CD4-positive, alpha-beta T cell (primary cell): ENCODE measurements at regions of chr10 and their contacts with region 1.

Region 1: GRCh38 chr10:72364239-72364777 is 9.6 kb upstream of the DNAJB12 start:
- DNase-seq: peak; percentile 78 to 92 (median 82)
- ATAC-seq: peak; percentile 100
- H3K4me3 ChIP-seq: peak overlapping the region; percentile 24
- H3K4me3 Mint-ChIP-seq: no peak overlapping the region
- H3K27ac ChIP-seq: peak overlapping the region in 1 of 2 donors; percentile 54
- H3K27ac Mint-ChIP-seq: peak overlapping the region; percentile 74
- H3K4me1 ChIP-seq: peaks cover 14% of the 10 kb centered on the region
- H3K4me1 Mint-ChIP-seq: peaks cover 17% of the 10 kb centered on the region
- H3K27me3 ChIP-seq: no peaks in the 10 kb centered on the region
- H3K27me3 Mint-ChIP-seq: no peaks in the 10 kb centered on the region
- CTCF ChIP-seq: peak; percentile 80

Region 2: DNA sequence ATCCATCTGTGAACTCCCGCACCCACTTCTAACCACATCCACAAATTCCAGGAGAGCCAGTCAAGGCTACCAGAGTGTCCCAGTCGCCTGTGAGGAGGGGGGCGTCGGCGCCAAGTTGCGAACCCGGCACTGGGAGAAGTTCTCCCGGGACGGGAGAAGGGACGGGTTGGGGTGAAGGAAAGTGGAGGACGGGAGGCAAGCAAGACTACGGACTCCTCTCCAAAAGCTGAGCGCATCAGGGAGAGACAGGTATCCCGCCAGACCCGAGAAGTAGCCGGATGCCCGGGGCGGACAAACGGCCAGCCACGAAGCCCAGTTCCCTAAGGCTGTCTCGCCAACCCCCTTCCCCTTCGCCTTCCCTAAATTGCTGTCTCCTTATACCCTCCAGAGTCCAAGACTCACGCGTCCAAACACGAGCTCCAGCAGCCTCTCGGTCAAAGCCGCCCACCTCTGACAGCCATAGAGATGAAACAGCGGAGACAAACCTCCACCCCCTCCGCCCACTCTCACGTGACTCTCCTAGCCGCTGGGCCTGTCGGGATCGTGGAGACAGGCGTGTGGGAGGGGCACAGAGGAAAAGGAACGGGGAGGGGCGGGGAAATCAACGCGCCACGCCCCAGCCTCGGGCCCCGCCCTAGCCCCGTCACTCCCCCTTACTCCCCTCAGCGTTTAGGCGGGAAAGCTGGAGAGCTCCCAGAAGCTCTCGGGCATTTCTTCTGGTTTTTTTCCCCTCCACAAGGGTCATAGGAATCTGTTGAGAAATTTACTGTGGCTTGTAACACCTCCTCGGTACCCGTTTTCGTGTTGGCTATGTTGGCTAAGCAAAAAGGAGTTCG is 261.5 kb after region 1 on chr10 and contains the start of gene MICU1:
- CTCF ChIA-PET with region 1: no interaction called
- POLR2A ChIA-PET with region 1: no interaction called
- intact Hi-C with region 1: loop called in 1 of 2 experiments (anchors 5 kb)
- DNase-seq: peak; percentile 85 to 97 (median 92)
- ATAC-seq: peak; percentile 99
- H3K4me3 ChIP-seq: peak within 1 kb of the TSS; percentile 92
- H3K4me3 Mint-ChIP-seq: peak within 1 kb of the TSS; percentile 99
- H3K27ac ChIP-seq: peak within 1 kb of the TSS; percentile 15 to 42
- H3K27ac Mint-ChIP-seq: peak within 1 kb of the TSS; percentile 83
- H3K4me1 ChIP-seq: peaks cover 16% of the 10 kb centered on the region
- H3K4me1 Mint-ChIP-seq: peaks cover 26% of the 10 kb centered on the region
- H3K27me3 ChIP-seq: no peaks in the 10 kb centered on the region
- H3K27me3 Mint-ChIP-seq: no peaks in the 10 kb centered on the region
- CTCF ChIP-seq: no peak
- total RNA-seq, gene MICU1: 9.4 to 12.1 TPM

Region 3: DNA sequence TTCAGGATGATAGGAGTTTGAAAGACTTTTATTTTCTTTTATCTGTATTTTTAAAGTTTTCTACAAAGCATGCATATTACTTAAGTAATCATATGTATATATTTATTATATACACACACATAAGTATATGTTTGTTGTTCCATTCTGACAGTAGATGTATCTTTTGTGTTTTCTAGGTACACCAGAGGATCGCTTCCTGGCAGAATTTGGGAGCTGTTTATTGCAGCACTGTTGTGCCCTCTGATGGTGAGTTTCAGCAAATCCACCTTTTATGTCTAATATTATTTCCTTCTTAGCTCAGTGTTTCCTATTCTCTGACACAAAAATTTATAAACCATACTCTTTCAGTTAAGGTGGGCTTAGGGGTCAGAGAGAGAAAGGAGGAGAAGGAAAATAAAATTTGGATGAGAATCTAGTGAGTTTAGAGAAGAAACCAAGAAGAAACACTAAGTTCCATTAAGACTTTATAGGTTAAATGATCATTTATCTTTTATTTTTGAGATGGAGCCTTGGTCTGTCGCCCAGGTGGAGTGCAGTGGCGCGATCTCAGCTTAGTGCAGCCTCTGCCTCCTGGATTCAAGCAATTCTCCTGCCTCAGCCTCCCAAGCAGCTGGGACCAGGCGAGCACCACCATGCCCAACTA is 470.0 kb after region 1 on chr10:
- CTCF ChIA-PET with region 1: interaction called, 23 read pairs
- POLR2A ChIA-PET with region 1: interaction called, 18 read pairs
- intact Hi-C with region 1: loop called (anchors 1 kb)
- DNase-seq: peak in 13 of 14 experiments; percentile 2 to 77 (median 23)
- ATAC-seq: peak; percentile 84
- H3K4me3 ChIP-seq: no peak overlapping the region
- H3K4me3 Mint-ChIP-seq: no peak overlapping the region
- H3K27ac ChIP-seq: no peak overlapping the region
- H3K27ac Mint-ChIP-seq: no peak overlapping the region
- H3K4me1 ChIP-seq: no peaks in the 10 kb centered on the region
- H3K4me1 Mint-ChIP-seq: peaks cover 4% of the 10 kb centered on the region
- H3K27me3 ChIP-seq: no peaks in the 10 kb centered on the region
- H3K27me3 Mint-ChIP-seq: no peaks in the 10 kb centered on the region
- CTCF ChIP-seq: peak; percentile 69

Region 4: DNA sequence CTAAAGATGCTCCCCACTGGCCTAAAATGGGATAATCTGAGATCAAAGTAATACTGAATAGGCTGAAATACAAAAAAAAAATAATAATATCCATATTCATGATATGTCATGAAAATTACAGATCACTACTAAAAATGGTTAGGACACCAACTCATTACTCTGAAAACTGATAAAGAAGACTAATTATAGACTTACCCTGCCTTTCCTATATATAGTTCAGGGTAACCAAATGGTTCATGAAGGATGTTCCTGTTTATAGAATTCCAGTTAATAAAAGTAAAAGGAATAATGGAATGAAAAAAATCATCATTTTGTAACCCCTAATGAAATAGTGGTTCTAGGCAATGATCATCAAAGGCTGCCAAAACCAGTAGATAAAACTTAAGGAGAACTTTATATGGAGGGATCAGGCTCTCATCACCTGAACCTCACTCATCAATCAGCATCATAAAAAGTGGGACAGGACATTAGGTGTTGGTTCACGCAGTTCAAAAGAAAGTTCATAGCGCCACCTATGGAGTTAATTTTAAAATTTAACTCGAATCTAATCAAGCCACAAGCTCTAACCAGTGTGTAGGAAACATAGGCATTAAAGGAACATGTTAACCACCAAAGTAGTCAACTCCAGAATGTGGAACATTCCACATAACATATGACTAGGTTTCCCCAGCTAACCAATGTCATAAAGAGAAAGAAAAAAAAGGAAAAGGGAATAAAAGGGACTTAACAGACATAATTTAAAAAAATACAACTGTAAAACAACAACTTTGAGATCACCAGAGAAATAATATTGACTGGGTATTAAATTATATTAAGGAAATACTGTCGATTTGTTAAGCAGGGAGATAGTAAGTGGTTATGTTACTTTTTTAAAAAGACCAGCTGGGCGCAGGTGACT is 696.7 kb after region 1 on chr10:
- CTCF ChIA-PET with region 1: interaction called, 3 read pairs
- POLR2A ChIA-PET with region 1: interaction called, 3 read pairs
- intact Hi-C with region 1: loop called (anchors 1 to 2 kb)
- DNase-seq: peak in 3 of 14 experiments; percentile 48 to 56 (median 52)
- ATAC-seq: peak; percentile 49
- H3K4me3 ChIP-seq: no peak overlapping the region
- H3K4me3 Mint-ChIP-seq: no peak overlapping the region
- H3K27ac ChIP-seq: no peak overlapping the region
- H3K27ac Mint-ChIP-seq: peak overlapping the region; percentile 34
- H3K4me1 ChIP-seq: peaks cover 4% of the 10 kb centered on the region
- H3K4me1 Mint-ChIP-seq: peaks cover 11% of the 10 kb centered on the region
- H3K27me3 ChIP-seq: no peaks in the 10 kb centered on the region
- H3K27me3 Mint-ChIP-seq: no peaks in the 10 kb centered on the region
- CTCF ChIP-seq: peak; percentile 45